ENCODE measurements at regions of chr5 and their contacts with region 1.

Region 1: GRCh38 chr5:179494774-179495526 is 55.4 kb upstream of the RUFY1 start:
- DNase-seq: no peak
- H3K4me3 ChIP-seq: no peak overlapping the region
- H3K27ac ChIP-seq: no peak overlapping the region
- H3K4me1 ChIP-seq: no peaks in the 10 kb centered on the region
- H3K27me3 ChIP-seq: no peaks in the 10 kb centered on the region
- CTCF ChIP-seq: no peak

Region 2: DNA sequence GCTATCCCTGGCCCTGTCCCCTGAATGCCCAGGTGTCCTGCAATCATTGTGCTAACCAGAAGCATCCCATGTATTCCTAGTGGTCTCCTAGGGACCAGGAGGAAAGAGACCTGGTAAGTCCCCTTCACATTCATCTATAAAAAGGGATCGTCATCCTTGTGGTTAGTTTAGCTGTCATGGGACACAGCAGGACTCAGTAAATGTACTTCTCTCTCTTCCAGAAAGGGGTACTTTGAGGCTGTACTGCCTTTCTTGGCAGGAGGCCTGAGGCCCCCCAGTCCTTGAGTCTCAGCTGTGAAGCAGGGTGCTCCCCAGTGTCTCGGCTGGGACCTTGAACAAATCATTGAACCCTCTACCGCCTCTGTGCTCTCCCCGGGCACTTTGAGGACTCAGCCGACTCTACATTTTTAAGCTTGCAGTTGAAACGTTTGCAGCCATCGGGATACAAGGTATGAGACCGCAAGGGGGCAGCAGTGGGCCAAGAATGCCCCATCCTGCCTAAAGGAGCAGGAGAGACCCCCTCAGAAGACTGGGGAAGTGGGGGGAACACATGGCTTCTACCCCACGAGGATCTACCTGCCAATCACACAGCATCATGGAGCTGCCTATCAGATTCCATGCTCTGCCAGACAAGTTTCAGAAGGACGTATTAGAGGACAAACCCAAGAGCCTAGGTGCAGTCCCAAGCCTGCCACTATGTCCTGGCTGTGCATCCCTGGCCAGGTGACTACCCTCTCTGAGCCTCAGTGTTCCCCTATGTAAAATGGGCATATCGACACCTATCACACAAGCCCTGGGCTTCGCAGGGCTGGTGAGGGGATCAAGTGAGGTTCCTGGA is 1260.0 kb before region 1 on chr5:
- CTCF ChIA-PET with region 1: no interaction called
- POLR2A ChIA-PET with region 1: no interaction called
- intact Hi-C with region 1: loop called (anchors 5 kb)
- DNase-seq: peak; percentile 76
- H3K4me3 ChIP-seq: no peak overlapping the region
- H3K27ac ChIP-seq: no peak overlapping the region
- H3K4me1 ChIP-seq: peaks cover 7% of the 10 kb centered on the region
- H3K27me3 ChIP-seq: no peaks in the 10 kb centered on the region
- CTCF ChIP-seq: peak; percentile 88

Region 3: DNA sequence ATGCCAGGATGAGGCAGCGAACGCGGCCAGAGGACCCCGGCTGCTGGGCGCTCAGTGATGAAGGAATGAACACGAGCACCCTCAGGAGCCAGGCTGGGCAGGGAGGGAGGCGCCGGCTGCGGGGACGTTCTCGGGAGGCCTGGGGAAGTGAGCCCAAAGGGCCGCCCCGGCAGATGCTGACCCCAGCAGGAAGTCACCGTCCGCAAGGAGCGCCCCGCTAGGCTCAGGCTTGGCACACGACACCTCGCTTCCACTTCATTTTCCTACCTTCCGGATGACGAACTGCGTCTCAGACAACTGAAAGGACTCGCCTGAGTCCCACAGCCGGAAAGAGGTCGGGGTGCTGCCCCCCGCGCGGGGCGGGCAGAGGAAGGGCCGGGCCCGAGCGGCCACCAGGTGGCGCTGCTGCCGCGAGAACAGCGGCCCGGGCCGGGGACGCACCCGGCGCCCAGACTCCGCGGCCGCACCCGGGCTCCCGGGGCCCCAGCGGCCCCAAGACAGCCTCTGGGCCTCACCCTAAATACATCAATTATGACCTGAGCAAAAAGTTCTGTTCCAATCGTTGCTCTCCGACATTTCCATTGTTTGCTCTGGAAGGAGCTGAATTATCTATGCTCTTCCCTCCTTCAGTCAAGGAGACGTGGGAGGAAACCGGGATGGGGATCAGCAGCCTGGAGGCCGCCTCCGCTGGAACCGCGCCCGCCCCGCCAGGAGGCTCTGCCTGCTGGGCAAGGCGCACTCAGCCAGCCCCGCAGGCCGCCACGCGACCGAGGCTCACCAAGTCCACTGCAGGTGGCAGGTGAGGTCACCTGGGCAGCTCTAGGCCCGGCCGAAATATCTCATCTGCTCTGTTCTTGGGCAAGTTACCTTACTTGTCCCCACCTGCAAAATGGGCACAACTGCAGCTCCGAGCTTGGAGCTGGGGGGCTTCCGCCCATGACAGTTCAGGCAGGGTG is 327.8 kb before region 1 on chr5:
- CTCF ChIA-PET with region 1: interaction called, 5 read pairs
- POLR2A ChIA-PET with region 1: no interaction called
- intact Hi-C with region 1: loop called (anchors 1 kb)
- DNase-seq: peak; percentile 51
- H3K4me3 ChIP-seq: peak overlapping the region; percentile 23
- H3K27ac ChIP-seq: no peak overlapping the region
- H3K4me1 ChIP-seq: no peaks in the 10 kb centered on the region
- H3K27me3 ChIP-seq: no peaks in the 10 kb centered on the region
- CTCF ChIP-seq: peak; percentile 75

Region 4: GRCh38 chr5:179697993-179698934 is 203.3 kb after region 1 on chr5:
- CTCF ChIA-PET with region 1: no interaction called
- POLR2A ChIA-PET with region 1: no interaction called
- intact Hi-C with region 1: no loop called
- DNase-seq: peak; percentile 99
- H3K4me3 ChIP-seq: peak overlapping the region; percentile 97
- H3K27ac ChIP-seq: peak overlapping the region; percentile 96
- H3K4me1 ChIP-seq: peaks cover 8% of the 10 kb centered on the region
- H3K27me3 ChIP-seq: no peaks in the 10 kb centered on the region
- CTCF ChIP-seq: no peak